Colonic mucosa (tissue), 4 donors: ENCODE measurements at regions of chr14 and their contacts with region 1.

Region 1: DNA sequence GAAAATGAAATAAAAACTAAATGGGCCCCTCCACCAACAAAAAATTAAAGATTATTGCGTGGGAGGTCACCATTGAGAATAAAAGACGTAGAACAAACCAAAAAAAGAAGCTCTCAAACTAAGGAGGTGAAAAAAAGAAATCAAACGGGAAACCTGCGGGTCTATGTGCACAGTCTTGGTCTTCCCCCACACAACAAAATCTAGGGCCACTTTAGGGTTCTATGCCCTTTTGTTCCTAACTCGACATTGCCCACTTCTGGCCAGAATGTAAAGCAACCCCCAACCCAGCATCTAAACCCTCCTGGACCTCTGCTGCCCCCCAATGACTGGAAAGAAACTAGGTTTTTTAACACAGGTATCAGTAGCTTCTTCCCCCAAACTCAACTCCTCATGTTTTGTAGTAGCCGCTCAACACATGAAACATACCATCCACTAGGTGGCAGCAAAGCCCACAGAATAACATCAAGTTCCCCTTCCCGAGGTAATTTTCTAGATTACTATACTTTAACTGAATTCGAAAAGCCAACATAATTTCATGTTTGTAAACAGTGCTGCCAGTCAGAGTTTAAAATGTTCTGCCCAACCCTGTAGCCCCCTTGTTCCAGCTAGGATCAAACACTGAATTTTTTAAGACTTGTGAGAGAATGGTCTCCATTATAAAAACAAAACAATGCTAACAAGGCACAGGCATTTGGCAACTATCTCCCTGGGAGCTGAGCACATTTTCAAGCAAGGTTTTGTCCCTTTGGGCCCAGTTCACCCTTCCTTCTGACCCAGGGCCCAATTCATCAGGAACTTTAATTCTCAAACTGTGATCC is 18.7 kb downstream of the DAD1 start:
- DNase-seq: peak; percentile 86
- H3K4me3 ChIP-seq: no peak overlapping the region
- H3K27ac ChIP-seq: peak overlapping the region; percentile 8
- H3K4me1 ChIP-seq: no peaks in the 10 kb centered on the region
- H3K27me3 ChIP-seq: no peaks in the 10 kb centered on the region
- CTCF ChIP-seq: peak; percentile 82

Region 2: GRCh38 chr14:22715186-22715812 is 145.0 kb after region 1 on chr14:
- intact Hi-C with region 1: loop called (anchors 10 kb)
- DNase-seq: no peak
- H3K4me3 ChIP-seq: no peak overlapping the region
- H3K27ac ChIP-seq: no peak overlapping the region
- H3K4me1 ChIP-seq: no peaks in the 10 kb centered on the region
- H3K27me3 ChIP-seq: no peaks in the 10 kb centered on the region
- CTCF ChIP-seq: no peak